CD8-positive, alpha-beta T cell (primary cell): ENCODE measurements at regions of chr17 and their contacts with region 1.

Region 1: GRCh38 chr17:77783991-77784820 is 174.3 kb upstream of the TNRC6C start:
- DNase-seq: peak; percentile 54 to 95 (median 70)
- ATAC-seq: peak; percentile 89
- H3K4me3 ChIP-seq: peak overlapping the region in 1 of 2 experiments; percentile 14
- H3K4me3 Mint-ChIP-seq: peak overlapping the region; percentile 60
- H3K27ac ChIP-seq: peak overlapping the region; percentile 65 to 89
- H3K27ac Mint-ChIP-seq: peak overlapping the region; percentile 94
- H3K4me1 ChIP-seq: peaks cover 15% of the 10 kb centered on the region
- H3K4me1 Mint-ChIP-seq: peaks cover 23% of the 10 kb centered on the region
- H3K27me3 ChIP-seq: no peaks in the 10 kb centered on the region
- H3K27me3 Mint-ChIP-seq: no peaks in the 10 kb centered on the region
- CTCF ChIP-seq: no peak

Region 2: GRCh38 chr17:77842528-77843147 is 58.4 kb after region 1 on chr17:
- CTCF ChIA-PET with region 1: no interaction called
- POLR2A ChIA-PET with region 1: no interaction called
- intact Hi-C with region 1: loop called in 1 of 2 experiments (anchors 2 kb)
- DNase-seq: peak in 1 of 9 experiments; percentile 36
- ATAC-seq: no peak
- H3K4me3 ChIP-seq: no peak overlapping the region
- H3K4me3 Mint-ChIP-seq: no peak overlapping the region
- H3K27ac ChIP-seq: peak overlapping the region in 1 of 2 experiments; percentile 25
- H3K27ac Mint-ChIP-seq: peak overlapping the region; percentile 93
- H3K4me1 ChIP-seq: peaks cover 53% of the 10 kb centered on the region
- H3K4me1 Mint-ChIP-seq: peaks cover 64% of the 10 kb centered on the region
- H3K27me3 ChIP-seq: no peaks in the 10 kb centered on the region
- H3K27me3 Mint-ChIP-seq: no peaks in the 10 kb centered on the region
- CTCF ChIP-seq: no peak